Mucosa of descending colon (tissue), 3 donors: ENCODE measurements at regions of chr4 and their contacts with region 1.

Region 1: GRCh38 chr4:68630373-68630772 is 40.1 kb downstream of the UGT2B15 start:
- DNase-seq: no peak
- ATAC-seq: no peak
- H3K4me3 ChIP-seq: no peak overlapping the region
- H3K4me1 ChIP-seq: no peaks in the 10 kb centered on the region
- CTCF ChIP-seq: no peak

Region 2: GRCh38 chr4:68489338-68489737 is 141.0 kb before region 1 on chr4:
- intact Hi-C with region 1: loop called in 1 of 2 experiments (anchors 10 kb)
- DNase-seq: peak in 1 of 3 donors; percentile 14
- ATAC-seq: no peak
- H3K4me3 ChIP-seq: no peak overlapping the region
- H3K4me1 ChIP-seq: no peaks in the 10 kb centered on the region
- CTCF ChIP-seq: no peak